Mammary epithelial cell (primary cell): ENCODE measurements at regions of chr1 and their contacts with region 1.

Region 1: DNA sequence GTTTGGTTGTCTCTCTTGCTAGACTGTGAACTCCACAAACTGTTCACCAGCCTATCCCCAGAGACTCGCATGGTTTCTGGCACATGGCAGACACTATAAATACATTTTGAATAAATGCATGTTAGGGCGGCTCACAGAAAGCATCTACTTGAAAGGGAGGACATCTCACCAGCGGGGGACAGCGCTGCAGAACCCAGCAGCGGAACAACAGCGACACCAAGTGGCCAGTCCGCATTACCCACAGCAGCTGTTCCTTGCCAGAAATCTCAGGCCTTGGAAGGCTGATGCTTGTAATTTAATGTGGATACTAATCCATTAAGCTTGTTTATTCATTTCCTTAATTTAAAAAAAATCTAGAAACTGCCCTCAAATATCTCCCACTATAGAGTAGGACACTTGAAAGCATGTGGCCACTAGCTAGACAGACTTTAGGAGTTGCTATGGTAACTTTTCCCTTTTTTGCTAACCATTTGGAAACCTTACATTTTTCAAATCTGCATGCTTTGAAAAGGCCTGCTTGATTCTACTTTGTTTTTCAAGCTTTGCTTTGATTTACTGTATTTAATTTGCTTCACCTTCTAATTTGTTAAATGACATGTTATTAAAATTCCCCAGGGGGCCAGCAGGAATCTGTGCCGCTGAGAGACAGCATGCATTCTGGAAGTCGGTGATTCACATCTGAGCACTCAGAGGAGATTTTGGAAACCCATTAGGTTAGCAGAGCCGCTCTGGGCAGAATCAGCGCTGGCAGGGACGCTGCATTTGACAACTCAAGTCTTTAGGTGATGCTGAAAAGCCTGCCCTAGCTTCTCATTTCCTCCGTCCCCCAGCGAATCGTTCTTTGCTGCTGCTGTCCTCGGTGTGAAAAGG is 63.5 kb upstream of the SSX2IP start:
- DNase-seq: peak; percentile 54
- H3K4me3 ChIP-seq: no peak overlapping the region
- H3K27ac ChIP-seq: no peak overlapping the region
- H3K4me1 ChIP-seq: peaks cover 24% of the 10 kb centered on the region
- H3K27me3 ChIP-seq: no peaks in the 10 kb centered on the region
- CTCF ChIP-seq: peak; percentile 96 to 99

Region 2: DNA sequence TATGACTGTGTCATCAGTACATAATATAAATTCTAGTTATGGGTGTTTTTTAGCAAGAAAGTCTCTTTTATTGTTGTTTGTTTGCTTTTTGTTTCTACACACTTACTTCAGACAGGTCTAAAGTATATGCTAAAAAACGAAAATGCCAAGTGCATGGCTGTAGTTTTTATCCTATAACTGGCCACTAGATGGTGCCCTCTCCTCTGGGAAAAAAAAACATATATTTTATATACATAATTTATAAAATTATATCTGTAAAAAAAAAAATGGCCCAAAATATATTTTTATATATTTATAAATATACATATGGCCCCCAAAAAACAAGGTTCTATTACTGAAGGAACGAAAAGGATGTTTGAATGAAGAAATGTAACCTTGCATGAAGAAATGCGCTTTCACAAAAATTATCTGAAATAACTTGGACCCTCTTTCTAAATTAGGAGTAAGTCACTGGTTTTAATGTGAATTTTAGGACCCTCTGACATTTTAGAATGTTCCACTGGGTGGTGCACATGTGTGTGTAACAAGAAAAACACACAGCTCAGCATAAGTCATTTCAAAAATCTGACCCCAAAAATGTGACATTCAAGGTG is 848.3 kb before region 1 on chr1:
- CTCF ChIA-PET with region 1: no interaction called
- dilution Hi-C with region 1: no loop called
- in situ Hi-C with region 1: loop called (anchors 25 kb)
- intact Hi-C with region 1: no loop called
- DNase-seq: no peak
- H3K4me3 ChIP-seq: no peak overlapping the region
- H3K27ac ChIP-seq: no peak overlapping the region
- H3K4me1 ChIP-seq: peaks cover 20% of the 10 kb centered on the region
- H3K27me3 ChIP-seq: no peaks in the 10 kb centered on the region
- CTCF ChIP-seq: peak; percentile 42 to 61

Region 3: DNA sequence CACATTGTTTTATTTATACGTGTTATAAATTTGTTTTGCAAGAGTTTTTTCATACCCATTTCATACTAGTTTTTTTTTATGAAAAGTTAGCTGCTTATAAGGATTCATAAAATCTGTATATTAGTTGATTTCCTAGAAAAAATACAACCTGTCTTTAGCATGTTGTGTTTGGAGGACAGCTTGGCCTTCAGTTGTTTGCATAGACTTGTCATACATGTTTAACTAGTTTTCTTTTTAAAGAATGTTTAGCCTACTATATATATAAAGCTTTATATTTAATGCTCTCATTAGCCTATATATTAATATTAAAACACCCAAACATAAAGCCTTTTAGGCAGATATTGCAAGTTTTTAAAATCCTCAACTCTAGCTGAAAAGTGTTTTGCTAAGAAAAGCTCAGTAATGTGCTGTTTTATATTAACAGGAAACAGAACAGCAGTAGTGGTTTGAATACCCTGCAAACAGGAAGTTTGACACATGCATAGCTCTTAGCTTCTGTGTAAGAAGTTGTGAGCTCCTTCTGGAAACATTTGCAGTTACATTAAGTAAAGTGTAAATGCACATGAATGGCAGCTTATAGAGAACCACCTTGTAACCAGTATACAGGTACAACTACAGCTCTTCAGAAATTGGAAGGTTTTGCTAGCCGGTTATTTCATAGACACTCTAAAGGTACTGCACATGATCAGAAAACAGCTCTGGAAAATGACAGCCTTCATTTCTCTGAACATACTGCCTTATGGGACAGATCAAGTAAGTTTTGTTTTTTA is 609.8 kb before region 1 on chr1 and contains the start of gene PRKACB:
- CTCF ChIA-PET with region 1: no interaction called
- dilution Hi-C with region 1: no loop called
- in situ Hi-C with region 1: loop called (anchors 10 to 25 kb)
- intact Hi-C with region 1: loop called (anchors 2 kb)
- DNase-seq: peak; percentile 27
- H3K4me3 ChIP-seq: no peak within 1 kb of the TSS
- H3K27ac ChIP-seq: no peak within 1 kb of the TSS
- H3K4me1 ChIP-seq: peaks cover 17% of the 10 kb centered on the region
- H3K27me3 ChIP-seq: no peaks in the 10 kb centered on the region
- CTCF ChIP-seq: no peak
- total RNA-seq, gene PRKACB: 25.3 to 29.0 TPM

Region 4: GRCh38 chr1:84442256-84442655 is 311.5 kb before region 1 on chr1:
- CTCF ChIA-PET with region 1: no interaction called
- dilution Hi-C with region 1: loop called (anchors 25 kb)
- in situ Hi-C with region 1: loop called (anchors 10 to 25 kb)
- intact Hi-C with region 1: loop called (anchors 1 kb)
- DNase-seq: peak; percentile 83
- H3K4me3 ChIP-seq: no peak overlapping the region
- H3K27ac ChIP-seq: no peak overlapping the region
- H3K4me1 ChIP-seq: peaks cover 8% of the 10 kb centered on the region
- H3K27me3 ChIP-seq: no peaks in the 10 kb centered on the region
- CTCF ChIP-seq: peak; percentile 53 to 60

Region 5: DNA sequence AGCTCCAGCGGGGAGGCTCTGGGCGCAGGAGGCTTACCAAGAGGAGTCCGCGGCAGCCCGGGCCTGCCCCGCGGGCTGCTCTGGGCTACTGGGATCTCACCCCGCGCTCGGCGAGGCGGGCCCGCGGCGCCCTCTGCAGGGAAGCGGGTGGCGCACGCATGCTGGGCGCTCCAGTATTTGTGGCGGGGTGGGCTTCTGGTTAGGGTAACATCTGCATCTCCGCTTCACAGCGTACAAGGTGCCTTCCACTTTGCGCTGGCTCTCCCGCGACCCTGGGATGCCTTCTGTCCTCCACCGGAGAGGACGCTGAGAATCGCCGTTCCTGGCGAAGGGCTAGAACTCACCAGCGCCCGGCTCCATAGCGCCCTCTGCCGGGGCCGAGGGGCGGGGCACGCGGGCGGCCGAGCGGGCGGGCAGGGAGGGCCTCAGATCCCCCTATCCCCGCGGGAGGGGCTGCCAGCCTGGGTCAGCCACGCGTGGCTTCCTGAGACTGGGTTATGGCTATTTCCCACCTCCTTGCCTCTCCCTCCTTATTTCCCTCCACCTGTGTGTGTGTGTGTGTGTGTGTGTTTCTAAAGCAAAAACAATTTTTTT is 132.9 kb before region 1 on chr1:
- CTCF ChIA-PET with region 1: no interaction called
- dilution Hi-C with region 1: loop called (anchors 5 kb)
- in situ Hi-C with region 1: no loop called
- intact Hi-C with region 1: loop called (anchors 1 kb)
- DNase-seq: peak; percentile 70
- H3K4me3 ChIP-seq: peak overlapping the region; percentile 58 to 72 (median 64)
- H3K27ac ChIP-seq: peak overlapping the region; percentile 34
- H3K4me1 ChIP-seq: peaks cover 13% of the 10 kb centered on the region
- H3K27me3 ChIP-seq: no peaks in the 10 kb centered on the region
- CTCF ChIP-seq: peak; percentile 55 to 77

Region 6: GRCh38 chr1:84668185-84668584 is 85.6 kb before region 1 on chr1:
- CTCF ChIA-PET with region 1: interaction called, 3 read pairs
- dilution Hi-C with region 1: no loop called
- in situ Hi-C with region 1: no loop called
- intact Hi-C with region 1: loop called (anchors 1 kb)
- DNase-seq: no peak
- H3K4me3 ChIP-seq: no peak overlapping the region
- H3K27ac ChIP-seq: no peak overlapping the region
- H3K4me1 ChIP-seq: no peaks in the 10 kb centered on the region
- H3K27me3 ChIP-seq: no peaks in the 10 kb centered on the region
- CTCF ChIP-seq: peak; percentile 7 to 31